ENCODE measurements at regions of chr1 and their contacts with region 1.

Region 1: GRCh38 chr1:32215629-32216480 is 6.3 kb downstream of the TMEM234 start:
- DNase-seq: peak; percentile 35 to 79
- ATAC-seq: peak; percentile 73 to 99 (median 92)
- H3K4me3 ChIP-seq: no peak overlapping the region
- H3K4me3 Mint-ChIP-seq: no peak overlapping the region
- H3K27ac ChIP-seq: no peak overlapping the region
- H3K27ac Mint-ChIP-seq: no peak overlapping the region
- H3K4me1 ChIP-seq: peaks cover 6% of the 10 kb centered on the region
- H3K4me1 Mint-ChIP-seq: peaks cover 5% of the 10 kb centered on the region in 2 donors
- H3K27me3 ChIP-seq: no peaks in the 10 kb centered on the region
- H3K27me3 Mint-ChIP-seq: no peaks in the 10 kb centered on the region
- CTCF ChIP-seq: peak; percentile 74

Region 2: GRCh38 chr1:32142446-32143301 is 73.2 kb before region 1 on chr1:
- intact Hi-C with region 1: no loop called
- DNase-seq: no peak
- ATAC-seq: no peak
- H3K4me3 ChIP-seq: no peak overlapping the region
- H3K4me3 Mint-ChIP-seq: no peak overlapping the region
- H3K27ac ChIP-seq: no peak overlapping the region
- H3K27ac Mint-ChIP-seq: peak overlapping the region in 1 of 2 donors; percentile 19
- H3K4me1 ChIP-seq: no peaks in the 10 kb centered on the region
- H3K4me1 Mint-ChIP-seq: peaks cover 47 to 56% of the 10 kb centered on the region in 2 donors
- H3K27me3 ChIP-seq: no peaks in the 10 kb centered on the region
- H3K27me3 Mint-ChIP-seq: no peaks in the 10 kb centered on the region
- CTCF ChIP-seq: no peak

Region 3: DNA sequence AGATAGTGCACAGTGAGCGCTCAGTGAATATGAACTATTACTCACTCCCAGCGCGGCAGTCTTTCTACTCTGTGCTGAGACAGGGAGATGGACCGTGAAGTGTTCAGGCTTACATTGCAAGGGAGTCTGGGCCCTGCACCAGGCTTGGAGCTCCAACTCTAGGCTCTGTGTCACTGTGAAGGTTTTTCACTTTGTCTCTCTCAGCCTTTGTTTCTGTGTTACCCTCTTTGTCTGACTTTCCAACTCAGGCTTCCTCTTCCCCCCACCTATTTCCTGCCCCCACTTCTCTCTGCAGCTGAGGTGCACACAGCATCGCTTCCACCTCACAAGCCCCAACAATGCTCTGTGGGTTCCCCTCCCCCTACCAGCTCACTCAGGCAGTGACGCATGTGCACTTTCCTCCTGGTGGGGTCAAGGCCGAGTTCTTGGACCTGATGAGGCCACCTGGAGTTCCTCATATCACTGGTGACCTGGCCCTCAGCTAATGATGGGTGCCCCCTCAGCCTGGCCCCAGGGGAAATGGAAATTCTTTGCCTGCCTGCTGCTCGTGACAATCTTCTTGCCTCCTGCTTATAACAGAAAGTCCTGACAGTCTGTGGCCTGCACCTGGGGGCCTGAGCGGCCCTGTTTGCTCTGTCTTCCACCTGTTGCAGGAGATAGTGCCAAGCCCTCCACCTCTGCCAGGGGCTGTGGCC is 34.1 kb after region 1 on chr1:
- intact Hi-C with region 1: loop called (anchors 5 kb)
- DNase-seq: peak; percentile 72 to 94
- ATAC-seq: peak; percentile 72 to 85 (median 82)
- H3K4me3 ChIP-seq: peak overlapping the region; percentile 4
- H3K4me3 Mint-ChIP-seq: peak overlapping the region; percentile 100
- H3K27ac ChIP-seq: peak overlapping the region; percentile 86
- H3K27ac Mint-ChIP-seq: peak overlapping the region; percentile 93 to 96
- H3K4me1 ChIP-seq: peaks cover 79% of the 10 kb centered on the region
- H3K4me1 Mint-ChIP-seq: peaks cover 56 to 71% of the 10 kb centered on the region in 2 donors
- H3K27me3 ChIP-seq: no peaks in the 10 kb centered on the region
- H3K27me3 Mint-ChIP-seq: no peaks in the 10 kb centered on the region
- CTCF ChIP-seq: no peak

Region 4: DNA sequence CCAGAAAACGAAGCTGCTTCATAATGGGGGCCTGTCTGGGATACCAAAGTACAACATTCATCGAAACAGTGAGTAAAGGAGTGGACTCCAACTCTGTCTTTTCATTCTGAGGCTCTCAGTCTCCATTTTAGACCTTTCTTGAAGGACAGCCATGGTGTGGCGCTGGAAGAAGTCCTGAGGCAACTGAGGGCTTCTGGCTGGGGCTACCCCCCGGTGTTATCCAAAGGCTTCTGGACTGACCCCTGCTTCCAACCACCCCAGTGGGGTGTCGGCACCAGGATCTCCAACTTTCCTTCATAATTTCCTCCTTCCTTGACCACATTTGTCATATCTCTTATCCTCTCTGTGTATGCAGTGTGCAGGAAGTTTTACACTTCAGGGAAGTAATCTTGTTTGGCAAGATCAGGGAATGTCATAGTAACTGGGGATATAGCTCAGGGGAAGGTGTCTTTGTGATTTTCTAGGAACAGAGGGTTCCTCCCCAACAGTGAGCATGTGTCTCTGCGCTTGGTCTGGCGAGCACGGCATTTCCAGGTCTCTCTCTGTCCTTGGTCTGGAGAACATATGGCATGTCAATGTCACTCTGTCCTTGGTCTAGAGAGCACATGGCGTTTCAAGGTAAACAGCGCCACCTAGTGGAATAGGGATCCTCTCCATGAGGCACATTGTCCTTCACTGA is 197.8 kb after region 1 on chr1:
- intact Hi-C with region 1: loop called (anchors 1 kb)
- DNase-seq: peak; percentile 48 to 92
- ATAC-seq: peak; percentile 81 to 85 (median 85)
- H3K4me3 ChIP-seq: no peak overlapping the region
- H3K4me3 Mint-ChIP-seq: no peak overlapping the region
- H3K27ac ChIP-seq: no peak overlapping the region
- H3K27ac Mint-ChIP-seq: no peak overlapping the region
- H3K4me1 ChIP-seq: no peaks in the 10 kb centered on the region
- H3K4me1 Mint-ChIP-seq: peaks cover 0 to 4% of the 10 kb centered on the region in 2 donors
- H3K27me3 ChIP-seq: no peaks in the 10 kb centered on the region
- H3K27me3 Mint-ChIP-seq: peaks cover 8 to 23% of the 10 kb centered on the region in 2 donors
- CTCF ChIP-seq: peak; percentile 90

Region 5: GRCh38 chr1:32426489-32427255 is 210.8 kb after region 1 on chr1:
- intact Hi-C with region 1: no loop called
- DNase-seq: no peak
- ATAC-seq: no peak
- H3K4me3 ChIP-seq: no peak overlapping the region
- H3K4me3 Mint-ChIP-seq: no peak overlapping the region
- H3K27ac ChIP-seq: no peak overlapping the region
- H3K27ac Mint-ChIP-seq: no peak overlapping the region
- H3K4me1 ChIP-seq: no peaks in the 10 kb centered on the region
- H3K4me1 Mint-ChIP-seq: no peaks in the 10 kb centered on the region
- H3K27me3 ChIP-seq: peaks cover 5% of the 10 kb centered on the region
- H3K27me3 Mint-ChIP-seq: peaks cover 44 to 56% of the 10 kb centered on the region in 2 donors
- CTCF ChIP-seq: no peak